ENCODE measurements at regions of chr5 and their contacts with region 1.

Region 1: DNA sequence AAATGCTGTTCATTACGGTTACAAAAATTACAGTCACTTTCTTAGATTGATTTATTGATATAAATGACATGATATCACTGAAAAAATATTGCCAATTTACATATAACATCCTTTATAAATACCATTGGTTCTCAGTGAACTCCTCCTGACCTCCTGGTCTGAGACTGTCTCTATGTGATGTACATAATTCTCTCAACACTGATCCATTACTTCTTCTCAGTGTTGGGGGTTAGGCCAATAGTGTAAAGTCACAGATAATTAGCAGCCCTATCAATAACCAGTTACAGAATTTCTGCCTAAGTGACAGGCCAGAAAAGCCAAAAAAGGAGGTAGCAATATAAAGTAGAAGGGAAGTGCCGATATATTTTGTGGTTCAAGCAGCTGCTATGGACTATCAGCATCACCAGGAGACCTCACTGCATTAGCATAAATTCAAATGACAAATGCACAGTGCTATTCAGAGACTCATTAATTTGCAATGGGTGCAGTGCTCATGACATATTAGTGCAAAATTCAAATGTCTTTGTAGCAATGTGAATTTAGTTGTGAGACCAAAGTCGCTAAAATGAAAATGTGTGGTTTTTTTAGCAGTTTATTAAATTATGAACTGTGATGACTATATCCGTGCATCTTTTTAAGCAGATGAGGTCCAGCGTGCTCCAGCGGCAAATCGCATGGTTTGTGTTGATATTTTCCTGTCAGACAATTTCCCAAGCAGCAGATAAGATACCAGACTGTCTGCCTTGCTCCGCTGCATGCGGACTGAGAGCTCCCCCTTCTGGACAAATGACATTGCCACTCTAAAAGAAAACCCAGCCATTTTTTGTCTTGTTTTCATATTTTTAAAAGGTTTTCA is 144.6 kb downstream of the CETN3 start:
- DNase-seq: peak; percentile 44 to 72 (median 72)
- ATAC-seq: peak; percentile 63 to 80
- H3K4me3 ChIP-seq: no peak overlapping the region
- H3K27ac ChIP-seq: no peak overlapping the region
- H3K4me1 ChIP-seq: no peaks in the 10 kb centered on the region
- H3K27me3 ChIP-seq: no peaks in the 10 kb centered on the region

Region 2: DNA sequence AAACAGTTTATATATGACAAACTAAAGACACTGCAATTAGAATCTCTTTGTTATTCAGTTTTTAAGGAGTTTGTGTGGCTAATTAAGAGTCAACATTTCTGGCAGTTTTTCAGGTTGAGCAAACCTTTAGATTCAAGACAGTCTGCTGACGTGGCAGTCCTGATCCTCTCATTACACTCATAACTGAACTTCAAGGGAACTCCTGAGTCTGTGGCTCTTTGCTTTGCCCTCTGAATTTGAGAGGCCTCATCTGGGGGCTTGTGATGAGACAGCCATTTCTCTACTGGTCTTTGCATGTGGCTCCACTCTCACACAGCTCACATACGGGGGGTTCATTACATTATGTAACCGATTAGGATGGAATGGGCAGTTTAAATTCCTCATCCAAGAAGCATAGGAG is 1199.0 kb before region 1 on chr5:
- intact Hi-C with region 1: loop called in 1 of 4 experiments (anchors 10 kb)
- DNase-seq: no peak
- ATAC-seq: no peak
- H3K4me3 ChIP-seq: no peak overlapping the region
- H3K27ac ChIP-seq: no peak overlapping the region
- H3K4me1 ChIP-seq: no peaks in the 10 kb centered on the region
- H3K27me3 ChIP-seq: no peaks in the 10 kb centered on the region

Region 3: DNA sequence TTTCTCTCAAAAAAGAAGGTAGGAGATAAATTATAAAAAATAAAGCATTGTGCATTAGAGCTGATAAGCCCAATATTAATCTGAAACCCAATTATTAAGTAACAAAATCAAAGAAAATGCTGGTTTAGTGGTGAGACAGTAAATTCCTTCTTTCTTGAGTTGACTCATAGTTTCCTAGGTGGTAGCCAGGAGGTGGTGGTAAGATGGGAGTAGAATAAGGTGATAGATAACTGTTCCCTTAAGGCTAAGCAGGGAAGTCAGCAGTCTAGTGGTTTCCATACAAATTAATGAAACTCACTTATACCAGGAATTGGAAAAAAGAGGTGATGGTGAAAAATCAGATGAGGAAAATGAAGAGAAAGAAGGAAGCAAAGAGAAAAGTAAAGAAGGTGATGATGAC is 241.3 kb after region 1 on chr5:
- intact Hi-C with region 1: no loop called
- DNase-seq: no peak
- ATAC-seq: no peak
- H3K4me3 ChIP-seq: no peak overlapping the region
- H3K27ac ChIP-seq: no peak overlapping the region
- H3K4me1 ChIP-seq: no peaks in the 10 kb centered on the region
- H3K27me3 ChIP-seq: no peaks in the 10 kb centered on the region

Measured in right cardiac atrium (tissue), 5 donors.